ENCODE measurements at regions of chr2 and their contacts with region 1.

Region 1: GRCh38 chr2:85420536-85421259 is 2.2 kb downstream of the SH2D6 start:
- H3K4me3 ChIP-seq: no peak overlapping the region
- H3K27ac ChIP-seq: no peak overlapping the region
- H3K4me1 ChIP-seq: peaks cover 4% of the 10 kb centered on the region
- CTCF ChIP-seq: peak; percentile 97

Region 2: DNA sequence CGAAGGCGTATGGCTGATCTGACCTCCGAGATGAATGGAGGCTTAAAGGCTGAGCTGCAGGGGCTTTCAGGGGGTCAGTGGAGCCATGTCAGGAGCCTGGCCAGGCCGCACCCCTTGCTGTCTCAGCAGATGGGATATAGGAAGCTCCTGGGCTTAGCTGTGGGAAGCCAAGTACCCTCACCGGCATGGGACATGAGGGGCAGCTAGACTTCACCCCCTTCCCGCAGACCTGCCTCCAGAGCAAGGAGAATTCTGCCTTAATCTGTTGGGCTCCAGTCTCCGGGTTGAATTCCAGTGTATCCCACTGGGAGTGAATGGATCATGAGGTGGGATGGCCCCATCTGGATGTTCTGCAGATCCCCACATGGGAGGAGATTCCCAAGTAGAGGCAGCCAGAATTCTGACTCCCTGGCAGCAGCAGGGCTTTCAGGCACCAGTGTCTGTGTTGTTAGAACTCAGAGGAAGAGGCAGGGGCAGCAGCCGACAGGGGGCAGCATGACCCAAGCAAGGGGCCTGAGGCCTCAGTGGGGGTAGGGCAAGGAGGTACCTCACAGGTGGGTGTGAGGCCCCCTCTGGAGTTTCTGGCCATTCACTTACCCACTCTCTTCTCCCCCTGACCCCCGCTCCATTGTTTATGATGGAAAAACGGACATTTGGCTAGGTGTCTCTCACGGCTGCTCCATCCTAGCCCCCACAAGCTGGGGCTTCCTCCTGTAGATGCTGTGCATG is 29.6 kb before region 1 on chr2:
- CTCF ChIA-PET with region 1: interaction called, 11 read pairs
- POLR2A ChIA-PET with region 1: no interaction called
- H3K4me3 ChIP-seq: no peak overlapping the region
- H3K27ac ChIP-seq: no peak overlapping the region
- H3K4me1 ChIP-seq: no peaks in the 10 kb centered on the region
- CTCF ChIP-seq: peak; percentile 66

Region 3: DNA sequence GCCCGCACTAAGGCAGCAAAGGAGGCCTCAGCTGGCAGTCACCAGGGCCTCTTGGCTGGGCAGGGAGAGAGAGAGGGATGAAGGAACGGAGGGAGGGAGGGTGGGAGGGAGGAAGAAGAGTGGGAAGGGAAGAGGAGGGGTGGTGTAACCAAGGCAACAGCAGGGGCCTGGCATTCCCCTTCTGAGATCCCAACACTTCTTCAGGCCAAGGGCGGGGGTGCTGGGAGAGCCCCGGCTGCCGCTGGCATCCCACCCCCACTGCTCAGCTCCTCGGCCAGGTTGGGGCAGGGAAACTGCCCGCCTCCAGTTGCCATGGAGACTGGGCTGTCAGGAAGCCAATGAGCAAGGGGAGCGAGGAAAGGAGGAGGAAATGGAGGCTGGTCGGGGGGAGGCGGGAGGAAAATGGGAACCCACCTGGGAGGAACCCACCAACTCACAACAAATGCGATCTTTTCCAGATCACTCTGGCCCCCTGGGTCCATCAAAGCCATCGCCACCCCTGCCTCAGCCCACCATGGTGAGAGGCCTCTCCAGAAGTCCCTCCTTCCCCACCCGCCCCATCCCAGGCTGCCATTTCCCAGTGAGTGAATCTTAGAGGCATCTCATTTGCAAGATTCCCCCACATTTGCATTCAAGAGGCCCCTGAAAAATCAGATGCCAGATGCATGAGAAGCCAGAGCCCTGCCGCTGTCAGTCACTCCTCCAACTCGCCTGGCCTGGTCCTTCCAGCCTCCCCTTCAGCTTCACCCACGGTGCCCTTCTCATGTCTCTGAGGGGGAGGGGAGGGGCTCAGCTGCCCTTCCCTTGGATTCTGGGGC is 10.3 kb after region 1 on chr2:
- CTCF ChIA-PET with region 1: interaction called, 14 read pairs
- POLR2A ChIA-PET with region 1: interaction called, 3 read pairs
- H3K4me3 ChIP-seq: no peak overlapping the region
- H3K27ac ChIP-seq: no peak overlapping the region
- H3K4me1 ChIP-seq: no peaks in the 10 kb centered on the region
- CTCF ChIP-seq: no peak

Region 4: DNA sequence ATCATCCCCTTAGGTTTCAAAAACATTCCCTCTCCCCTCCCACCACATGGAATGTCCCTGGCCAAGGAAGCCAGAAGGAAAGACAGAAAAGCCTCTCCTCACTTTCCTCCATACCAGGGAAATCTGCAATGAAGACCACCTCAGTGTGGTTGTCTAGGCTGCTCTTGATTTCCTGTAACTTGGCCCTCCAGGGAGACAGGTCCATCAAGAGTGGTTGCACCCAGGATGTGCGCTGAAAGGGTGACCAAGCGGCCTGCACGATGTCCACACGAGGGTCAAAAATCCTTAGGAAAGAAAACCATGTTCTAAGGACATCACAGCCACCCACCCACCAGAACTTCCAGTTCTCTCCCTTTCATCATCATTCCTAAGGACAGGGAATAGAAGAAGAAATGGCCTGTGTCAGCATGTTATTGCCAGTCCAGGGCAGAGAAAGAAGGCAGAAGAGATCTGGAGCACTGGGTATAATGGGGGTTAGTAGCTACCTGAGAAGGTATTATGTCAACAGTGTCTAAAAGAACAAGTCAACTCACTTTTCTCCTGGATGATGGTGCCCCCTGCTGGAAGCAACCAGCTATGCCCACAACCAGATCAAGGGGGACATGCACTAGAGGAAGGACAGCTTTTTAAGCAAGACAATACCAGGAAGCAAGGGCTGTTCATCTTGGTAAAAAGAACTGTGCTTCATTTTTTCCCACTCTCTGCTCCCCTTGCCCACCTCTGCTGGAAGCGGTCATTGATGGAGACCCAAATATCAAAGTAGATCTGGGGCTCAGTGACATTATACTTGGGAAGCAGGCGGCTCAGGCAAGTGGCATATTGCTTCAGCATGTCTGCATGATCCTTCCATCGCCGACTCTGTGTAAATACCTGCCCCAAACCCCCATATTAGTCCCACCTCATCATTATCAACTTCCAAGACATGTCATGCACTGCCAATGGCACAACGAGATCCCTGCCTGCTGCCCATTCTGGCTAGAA is 131.3 kb after region 1 on chr2:
- CTCF ChIA-PET with region 1: interaction called, 144 read pairs
- POLR2A ChIA-PET with region 1: interaction called, 20 read pairs
- H3K4me3 ChIP-seq: no peak overlapping the region
- H3K27ac ChIP-seq: no peak overlapping the region
- H3K4me1 ChIP-seq: no peaks in the 10 kb centered on the region
- CTCF ChIP-seq: peak; percentile 69

Region 5: DNA sequence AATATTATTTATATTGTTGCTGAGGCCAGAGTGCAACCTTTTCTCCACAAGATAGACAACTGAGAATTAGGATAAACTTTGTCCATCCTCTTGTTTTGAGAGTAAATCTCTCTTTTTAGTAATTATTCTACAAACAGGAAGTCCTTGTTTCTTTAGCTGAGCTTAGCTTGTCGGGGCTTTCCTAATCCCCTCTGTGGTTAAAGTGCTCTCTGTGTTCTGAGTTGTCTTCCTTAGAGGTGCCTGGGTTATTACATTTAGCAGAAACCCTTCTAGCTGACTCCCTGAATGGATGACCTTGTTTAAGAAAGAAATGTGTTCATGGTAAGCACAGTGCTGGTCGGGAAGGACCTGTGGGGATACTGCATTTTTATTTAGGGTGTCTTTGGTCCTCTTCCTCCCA is 208.0 kb after region 1 on chr2:
- CTCF ChIA-PET with region 1: no interaction called
- POLR2A ChIA-PET with region 1: no interaction called
- H3K4me3 ChIP-seq: no peak overlapping the region
- H3K27ac ChIP-seq: no peak overlapping the region
- H3K4me1 ChIP-seq: no peaks in the 10 kb centered on the region
- CTCF ChIP-seq: no peak